Caco-2 (cell line): ENCODE measurements at regions of chr3 and their contacts with region 1.

Region 1: GRCh38 chr3:102466001-102466400 is 31.2 kb downstream of the ZPLD1 start:
- DNase-seq: no peak
- H3K4me3 ChIP-seq: no peak overlapping the region
- H3K4me3 Mint-ChIP-seq: no peak overlapping the region
- H3K27ac Mint-ChIP-seq: no peak overlapping the region
- H3K4me1 ChIP-seq: no peaks in the 10 kb centered on the region
- H3K4me1 Mint-ChIP-seq: no peaks in the 10 kb centered on the region
- H3K27me3 ChIP-seq: no peaks in the 10 kb centered on the region
- H3K27me3 Mint-ChIP-seq: peaks cover 3% of the 10 kb centered on the region
- CTCF ChIP-seq: no peak

Region 2: GRCh38 chr3:102235679-102236078 is 230.3 kb before region 1 on chr3:
- CTCF ChIA-PET with region 1: no interaction called
- POLR2A ChIA-PET with region 1: no interaction called
- intact Hi-C with region 1: loop called (anchors 10 kb)
- DNase-seq: peak in 1 of 2 experiments; percentile 8
- H3K4me3 ChIP-seq: no peak overlapping the region
- H3K4me3 Mint-ChIP-seq: no peak overlapping the region
- H3K27ac Mint-ChIP-seq: no peak overlapping the region
- H3K4me1 ChIP-seq: no peaks in the 10 kb centered on the region
- H3K4me1 Mint-ChIP-seq: no peaks in the 10 kb centered on the region
- H3K27me3 ChIP-seq: no peaks in the 10 kb centered on the region
- H3K27me3 Mint-ChIP-seq: peaks cover 10% of the 10 kb centered on the region
- CTCF ChIP-seq: peak in 1 of 2 experiments; percentile 19

Region 3: GRCh38 chr3:102299125-102299877 is 166.7 kb before region 1 on chr3:
- CTCF ChIA-PET with region 1: no interaction called
- POLR2A ChIA-PET with region 1: no interaction called
- intact Hi-C with region 1: no loop called
- DNase-seq: no peak
- H3K4me3 ChIP-seq: no peak overlapping the region
- H3K4me3 Mint-ChIP-seq: no peak overlapping the region
- H3K27ac Mint-ChIP-seq: no peak overlapping the region
- H3K4me1 ChIP-seq: no peaks in the 10 kb centered on the region
- H3K4me1 Mint-ChIP-seq: no peaks in the 10 kb centered on the region
- H3K27me3 ChIP-seq: no peaks in the 10 kb centered on the region
- H3K27me3 Mint-ChIP-seq: peaks cover 3% of the 10 kb centered on the region
- CTCF ChIP-seq: no peak

Region 4: DNA sequence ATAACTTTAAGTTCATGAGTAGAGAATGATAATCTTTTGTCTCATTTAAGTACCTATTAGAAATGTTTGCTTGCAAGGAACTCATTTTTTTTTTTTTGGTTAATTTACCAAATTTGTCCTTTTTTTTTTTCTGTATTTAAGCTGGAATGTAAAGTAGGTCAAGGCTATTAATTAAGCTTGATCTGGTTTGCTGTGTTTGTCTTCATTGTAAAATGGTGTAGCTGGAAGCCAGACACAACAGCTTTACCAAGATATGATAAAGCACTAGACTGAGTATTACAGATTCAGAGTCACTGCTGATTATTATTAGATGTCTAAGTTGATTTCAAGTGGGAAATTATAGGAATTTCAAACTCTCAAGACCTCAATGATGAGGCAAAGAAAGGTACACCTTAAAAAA is 46.2 kb before region 1 on chr3:
- CTCF ChIA-PET with region 1: no interaction called
- POLR2A ChIA-PET with region 1: no interaction called
- intact Hi-C with region 1: no loop called
- DNase-seq: no peak
- H3K4me3 ChIP-seq: no peak overlapping the region
- H3K4me3 Mint-ChIP-seq: no peak overlapping the region
- H3K27ac Mint-ChIP-seq: no peak overlapping the region
- H3K4me1 ChIP-seq: no peaks in the 10 kb centered on the region
- H3K4me1 Mint-ChIP-seq: no peaks in the 10 kb centered on the region
- H3K27me3 ChIP-seq: no peaks in the 10 kb centered on the region
- H3K27me3 Mint-ChIP-seq: peaks cover 4% of the 10 kb centered on the region
- CTCF ChIP-seq: no peak

Region 5: GRCh38 chr3:102529452-102529851 is 63.5 kb after region 1 on chr3:
- CTCF ChIA-PET with region 1: no interaction called
- POLR2A ChIA-PET with region 1: no interaction called
- intact Hi-C with region 1: loop called (anchors 1 kb)
- DNase-seq: peak in 1 of 2 experiments; percentile 8
- H3K4me3 ChIP-seq: no peak overlapping the region
- H3K4me3 Mint-ChIP-seq: no peak overlapping the region
- H3K27ac Mint-ChIP-seq: no peak overlapping the region
- H3K4me1 ChIP-seq: no peaks in the 10 kb centered on the region
- H3K4me1 Mint-ChIP-seq: no peaks in the 10 kb centered on the region
- H3K27me3 ChIP-seq: no peaks in the 10 kb centered on the region
- H3K27me3 Mint-ChIP-seq: no peaks in the 10 kb centered on the region
- CTCF ChIP-seq: peak in 1 of 2 experiments; percentile 50

Region 6: DNA sequence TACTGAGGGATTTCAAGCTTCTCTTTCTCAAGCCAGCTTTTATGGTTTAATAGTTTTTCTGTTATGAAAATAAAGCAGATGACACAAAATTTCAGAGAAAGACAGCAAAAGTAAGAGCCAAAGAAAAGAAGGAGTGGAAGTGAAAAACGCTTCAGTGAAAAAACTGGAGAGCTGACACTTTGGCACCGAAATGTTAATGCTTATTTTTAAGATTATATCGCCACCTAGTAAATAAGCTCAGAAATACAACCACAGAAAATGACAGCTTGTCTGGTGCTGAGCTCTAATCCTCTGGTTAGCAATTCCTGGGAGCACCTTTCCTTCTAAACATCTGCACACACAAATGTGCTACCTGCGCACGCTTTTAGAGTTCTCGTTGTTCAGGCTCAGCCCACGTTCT is 70.5 kb after region 1 on chr3:
- CTCF ChIA-PET with region 1: interaction called, 3 read pairs
- POLR2A ChIA-PET with region 1: no interaction called
- intact Hi-C with region 1: loop called (anchors 1 kb)
- DNase-seq: peak in 1 of 2 experiments; percentile 17
- H3K4me3 ChIP-seq: no peak overlapping the region
- H3K4me3 Mint-ChIP-seq: no peak overlapping the region
- H3K27ac Mint-ChIP-seq: no peak overlapping the region
- H3K4me1 ChIP-seq: no peaks in the 10 kb centered on the region
- H3K4me1 Mint-ChIP-seq: no peaks in the 10 kb centered on the region
- H3K27me3 ChIP-seq: no peaks in the 10 kb centered on the region
- H3K27me3 Mint-ChIP-seq: peaks cover 3% of the 10 kb centered on the region
- CTCF ChIP-seq: peak; percentile 21 to 35